ENCODE measurements at regions of chr3 and their contacts with region 1.

Region 1: GRCh38 chr3:189288348-189289235 is 116.8 kb downstream of the TPRG1 start:
- DNase-seq: no peak
- H3K4me3 ChIP-seq: no peak overlapping the region
- H3K4me3 Mint-ChIP-seq: peak overlapping the region in 1 of 8 donors; percentile 7
- H3K27ac ChIP-seq: no peak overlapping the region
- H3K27ac Mint-ChIP-seq: peak overlapping the region in 2 of 7 donors; percentile 19 to 21
- H3K4me1 ChIP-seq: peaks cover 28% of the 10 kb centered on the region
- H3K4me1 Mint-ChIP-seq: peaks cover 26 to 33% (median 28%) of the 10 kb centered on the region in 4 donors
- H3K27me3 ChIP-seq: no peaks in the 10 kb centered on the region
- H3K27me3 Mint-ChIP-seq: no peaks in the 10 kb centered on the region

Region 2: GRCh38 chr3:189324538-189325138 is 36.0 kb after region 1 on chr3:
- CTCF ChIA-PET with region 1: no interaction called
- POLR2A ChIA-PET with region 1: no interaction called
- intact Hi-C with region 1: loop called (anchors 5 kb)
- DNase-seq: peak; percentile 89 to 94 (median 93)
- H3K4me3 ChIP-seq: peak overlapping the region in 1 of 2 donors; percentile 6
- H3K4me3 Mint-ChIP-seq: peak overlapping the region; percentile 75 to 90 (median 84)
- H3K27ac ChIP-seq: peak overlapping the region; percentile 31
- H3K27ac Mint-ChIP-seq: peak overlapping the region; percentile 91 to 97 (median 96)
- H3K4me1 ChIP-seq: peaks cover 59% of the 10 kb centered on the region
- H3K4me1 Mint-ChIP-seq: peaks cover 43 to 66% (median 48%) of the 10 kb centered on the region in 4 donors
- H3K27me3 ChIP-seq: no peaks in the 10 kb centered on the region
- H3K27me3 Mint-ChIP-seq: no peaks in the 10 kb centered on the region

Region 3: DNA sequence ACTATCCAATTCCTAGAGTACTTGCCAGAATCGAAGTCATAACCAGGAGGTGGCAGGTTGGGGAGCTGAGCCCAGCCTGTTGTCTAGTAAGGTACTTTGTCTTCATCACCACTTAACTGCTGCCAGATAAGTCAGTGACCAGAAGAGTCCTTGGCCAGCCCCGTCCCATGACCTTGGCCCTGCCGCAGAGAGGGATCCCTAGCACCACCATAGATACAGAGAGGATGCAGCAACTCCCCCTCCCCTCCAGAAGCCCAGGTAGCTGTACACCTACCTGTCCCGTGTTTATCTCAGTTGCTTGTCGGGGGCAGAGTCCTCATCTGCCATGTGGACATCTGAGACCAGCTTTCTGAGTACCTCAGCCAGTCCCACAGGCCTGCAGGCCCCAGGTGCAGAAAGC is 189.0 kb after region 1 on chr3:
- CTCF ChIA-PET with region 1: no interaction called
- POLR2A ChIA-PET with region 1: no interaction called
- intact Hi-C with region 1: no loop called
- DNase-seq: no peak
- H3K4me3 ChIP-seq: no peak overlapping the region
- H3K4me3 Mint-ChIP-seq: no peak overlapping the region
- H3K27ac ChIP-seq: no peak overlapping the region
- H3K27ac Mint-ChIP-seq: no peak overlapping the region
- H3K4me1 ChIP-seq: no peaks in the 10 kb centered on the region
- H3K4me1 Mint-ChIP-seq: no peaks in the 10 kb centered on the region
- H3K27me3 ChIP-seq: no peaks in the 10 kb centered on the region
- H3K27me3 Mint-ChIP-seq: no peaks in the 10 kb centered on the region